Activated CD4-positive, alpha-beta T cell treated with anti-CD3 and anti-CD28 coated beads for 36 hours (primary cell): ENCODE measurements at regions of chr11 and their contacts with region 1.

Region 1: GRCh38 chr11:111982019-111982464 is 43.2 kb upstream of the DLAT start:
- DNase-seq: peak; percentile 78
- ATAC-seq: peak; percentile 88
- H3K4me3 Mint-ChIP-seq: no peak overlapping the region
- H3K27ac Mint-ChIP-seq: no peak overlapping the region
- H3K4me1 Mint-ChIP-seq: peaks cover 7% of the 10 kb centered on the region
- H3K27me3 Mint-ChIP-seq: peaks cover 22% of the 10 kb centered on the region

Region 2: GRCh38 chr11:111932611-111932950 is 49.5 kb before region 1 on chr11:
- CTCF ChIA-PET with region 1: interaction called, 47 read pairs
- POLR2A ChIA-PET with region 1: interaction called, 5 read pairs
- intact Hi-C with region 1: loop called (anchors 1 kb)
- DNase-seq: no peak
- ATAC-seq: peak; percentile 73
- H3K4me3 Mint-ChIP-seq: peak overlapping the region; percentile 28
- H3K27ac Mint-ChIP-seq: peak overlapping the region; percentile 88
- H3K4me1 Mint-ChIP-seq: peaks cover 40% of the 10 kb centered on the region
- H3K27me3 Mint-ChIP-seq: no peaks in the 10 kb centered on the region

Region 3: GRCh38 chr11:111938687-111939160 is 43.3 kb before region 1 on chr11:
- CTCF ChIA-PET with region 1: interaction called, 17 read pairs
- POLR2A ChIA-PET with region 1: no interaction called
- intact Hi-C with region 1: no loop called
- DNase-seq: peak; percentile 66
- ATAC-seq: peak; percentile 89
- H3K4me3 Mint-ChIP-seq: peak overlapping the region; percentile 73
- H3K27ac Mint-ChIP-seq: peak overlapping the region; percentile 93
- H3K4me1 Mint-ChIP-seq: peaks cover 51% of the 10 kb centered on the region
- H3K27me3 Mint-ChIP-seq: no peaks in the 10 kb centered on the region

Region 4: GRCh38 chr11:111944651-111945051 is 37.4 kb before region 1 on chr11:
- CTCF ChIA-PET with region 1: interaction called, 10 read pairs
- POLR2A ChIA-PET with region 1: interaction called, 4 read pairs
- intact Hi-C with region 1: no loop called
- DNase-seq: peak; percentile 31
- ATAC-seq: peak; percentile 93
- H3K4me3 Mint-ChIP-seq: peak overlapping the region; percentile 29
- H3K27ac Mint-ChIP-seq: peak overlapping the region; percentile 94
- H3K4me1 Mint-ChIP-seq: peaks cover 27% of the 10 kb centered on the region
- H3K27me3 Mint-ChIP-seq: no peaks in the 10 kb centered on the region

Region 5: DNA sequence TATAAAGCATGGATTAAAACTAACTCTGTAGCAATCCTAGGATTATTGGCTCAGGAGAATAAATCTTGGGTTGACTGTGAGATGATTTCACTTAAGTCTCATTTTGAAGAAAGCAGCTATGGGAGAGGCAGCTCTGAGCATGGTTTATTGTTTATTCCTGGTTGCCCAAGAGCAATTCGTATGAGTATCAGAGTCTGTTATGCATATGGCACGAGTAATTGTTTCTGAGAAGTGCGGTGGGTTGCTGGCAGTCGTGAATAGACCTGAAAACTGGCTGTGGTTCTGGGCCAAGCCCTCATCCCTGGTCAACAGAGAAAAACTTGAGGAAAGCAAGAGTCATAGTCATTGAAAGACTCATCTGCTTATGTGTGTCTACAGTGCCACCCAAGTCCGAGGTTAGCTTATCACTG is 18.1 kb before region 1 on chr11:
- CTCF ChIA-PET with region 1: interaction called, 16 read pairs
- POLR2A ChIA-PET with region 1: no interaction called
- intact Hi-C with region 1: no loop called
- DNase-seq: peak; percentile 43
- ATAC-seq: peak; percentile 89
- H3K4me3 Mint-ChIP-seq: no peak overlapping the region
- H3K27ac Mint-ChIP-seq: peak overlapping the region; percentile 22
- H3K4me1 Mint-ChIP-seq: peaks cover 6% of the 10 kb centered on the region
- H3K27me3 Mint-ChIP-seq: no peaks in the 10 kb centered on the region

Region 6: DNA sequence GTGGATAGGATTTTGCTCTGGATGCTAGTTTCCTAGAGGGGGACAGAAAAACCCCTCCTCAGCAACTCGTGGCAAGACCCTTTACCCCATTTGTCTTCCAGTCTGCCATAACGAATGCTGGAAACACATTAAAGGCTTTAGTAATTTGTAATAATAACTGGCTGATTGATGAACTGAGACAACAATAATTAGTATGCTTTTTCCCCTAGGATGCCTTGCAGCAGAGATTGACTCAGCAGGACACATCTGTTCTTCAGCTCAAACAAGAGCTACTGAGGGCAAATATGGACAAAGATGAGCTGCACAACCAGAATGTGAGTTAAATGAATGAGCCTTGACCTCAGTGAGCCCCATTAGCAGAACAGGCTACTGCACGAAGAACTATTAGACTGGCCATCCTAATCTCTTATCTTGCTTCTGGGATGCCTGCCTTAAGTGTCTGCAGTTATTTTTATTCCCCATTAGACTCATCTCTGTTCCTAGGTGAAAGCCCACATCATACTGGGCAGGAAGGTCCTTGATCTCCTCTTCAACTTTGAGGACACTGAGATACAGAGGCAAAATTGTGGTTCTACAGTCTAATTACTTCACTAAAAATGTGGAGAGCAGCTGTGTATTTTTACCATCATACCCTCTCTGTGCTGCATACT is 10.3 kb after region 1 on chr11:
- CTCF ChIA-PET with region 1: interaction called, 13 read pairs
- POLR2A ChIA-PET with region 1: no interaction called
- intact Hi-C with region 1: no loop called
- DNase-seq: no peak
- ATAC-seq: no peak
- H3K4me3 Mint-ChIP-seq: no peak overlapping the region
- H3K27ac Mint-ChIP-seq: no peak overlapping the region
- H3K4me1 Mint-ChIP-seq: no peaks in the 10 kb centered on the region
- H3K27me3 Mint-ChIP-seq: no peaks in the 10 kb centered on the region